H1 (cell line): ENCODE measurements at regions of chr1 and their contacts with region 1.

Region 1: GRCh38 chr1:111769517-111770146 is 13.9 kb downstream of the DDX20 start:
- DNase-seq: no peak
- H3K4me3 ChIP-seq: no peak overlapping the region
- H3K27ac ChIP-seq: no peak overlapping the region
- H3K4me1 ChIP-seq: no peaks in the 10 kb centered on the region
- H3K27me3 ChIP-seq: no peaks in the 10 kb centered on the region
- CTCF ChIP-seq: peak in 2 of 3 experiments; percentile 60 to 73; a peak in 2 of 4 replicates
- EP300 ChIP-seq: no peak
- POLR2A ChIP-seq: no peak
- RAD21 ChIP-seq: peak; percentile 81 to 83

Region 2: DNA sequence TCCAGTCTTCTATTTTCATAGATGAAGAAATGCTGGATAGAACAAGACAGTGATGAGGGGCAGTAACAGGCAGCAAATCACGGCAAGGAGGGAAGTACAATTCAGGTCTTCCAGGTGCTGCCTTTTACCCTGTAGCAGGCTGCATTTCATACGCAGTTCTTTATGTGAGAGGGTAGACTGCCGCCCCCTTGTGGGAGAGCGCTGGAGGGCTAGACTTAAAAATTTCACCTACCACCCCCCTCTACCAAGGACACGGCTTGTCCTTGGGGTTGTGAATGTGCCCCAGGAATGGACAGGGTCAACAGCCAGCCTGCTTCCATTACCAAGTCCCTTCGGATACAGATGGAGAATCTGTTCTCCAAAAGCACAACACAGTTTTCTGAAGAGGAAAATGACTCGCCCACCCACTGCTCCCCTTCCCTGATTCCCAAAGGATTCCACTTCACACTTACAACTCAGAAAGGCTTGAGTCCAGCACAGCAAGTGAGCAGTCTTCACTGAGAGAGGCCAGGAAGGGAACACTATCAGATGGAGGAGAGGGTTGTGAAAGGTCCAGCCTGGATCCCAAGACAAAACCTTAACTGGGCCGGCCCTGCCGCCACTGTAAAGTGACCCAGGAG is 327.9 kb before region 1 on chr1:
- CTCF ChIA-PET with region 1: no interaction called
- POLR2A ChIA-PET with region 1: no interaction called
- DNase-seq: peak; percentile 31 to 78
- H3K4me3 ChIP-seq: no peak overlapping the region
- H3K27ac ChIP-seq: no peak overlapping the region
- H3K4me1 ChIP-seq: no peaks in the 10 kb centered on the region
- H3K27me3 ChIP-seq: no peaks in the 10 kb centered on the region
- CTCF ChIP-seq: peak; percentile 67 to 81 (median 68)
- EP300 ChIP-seq: no peak
- POLR2A ChIP-seq: no peak
- RAD21 ChIP-seq: peak; percentile 56 to 66

Region 3: DNA sequence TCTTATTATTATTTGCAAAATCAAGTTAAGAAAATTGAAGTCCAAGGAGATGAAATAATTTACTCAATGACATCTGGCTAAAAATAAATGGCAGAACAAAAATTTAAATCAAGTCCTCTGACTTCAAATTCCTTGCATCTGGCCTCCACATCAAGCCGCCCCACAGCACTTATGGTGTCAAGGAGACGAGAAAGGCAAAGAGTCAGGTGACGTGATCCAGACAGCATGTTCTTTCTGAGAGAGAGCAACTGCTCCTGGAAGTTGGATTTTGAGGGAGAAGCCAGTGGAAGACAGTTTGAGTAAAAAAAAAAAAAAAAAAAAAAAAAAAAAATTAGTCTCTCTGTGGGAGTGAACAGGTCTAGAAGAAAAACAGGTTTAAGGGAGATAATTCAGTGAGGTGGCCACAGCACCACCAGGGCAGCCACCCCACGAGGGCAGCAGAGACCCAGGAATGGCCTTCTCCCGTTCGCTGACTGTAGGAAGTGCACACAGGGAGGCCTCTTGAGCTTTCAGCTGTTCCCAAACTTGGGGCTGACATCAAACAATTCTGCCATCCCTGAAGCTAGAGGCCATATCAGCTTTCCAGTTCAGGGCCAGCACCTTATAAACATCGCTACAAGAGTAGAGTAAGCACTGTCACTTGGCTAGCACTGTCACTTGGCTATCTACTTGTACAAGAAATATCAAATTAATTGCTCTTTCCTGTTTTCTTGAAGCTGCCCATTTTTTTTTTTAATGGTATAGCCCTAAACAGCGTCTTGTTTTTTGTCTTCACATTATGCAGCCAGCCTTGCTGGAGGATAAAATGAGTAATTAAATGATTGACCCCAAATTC is 288.0 kb before region 1 on chr1:
- CTCF ChIA-PET with region 1: interaction called, 17 read pairs
- POLR2A ChIA-PET with region 1: no interaction called
- DNase-seq: peak; percentile 43 to 75
- H3K4me3 ChIP-seq: no peak overlapping the region
- H3K27ac ChIP-seq: no peak overlapping the region
- H3K4me1 ChIP-seq: no peaks in the 10 kb centered on the region
- H3K27me3 ChIP-seq: no peaks in the 10 kb centered on the region
- CTCF ChIP-seq: peak; percentile 84 to 92 (median 84)
- EP300 ChIP-seq: no peak
- POLR2A ChIP-seq: no peak
- RAD21 ChIP-seq: peak; percentile 97

Region 4: GRCh38 chr1:111624382-111624781 is 145.2 kb before region 1 on chr1:
- CTCF ChIA-PET with region 1: no interaction called
- POLR2A ChIA-PET with region 1: no interaction called
- DNase-seq: no peak
- H3K4me3 ChIP-seq: no peak overlapping the region
- H3K27ac ChIP-seq: no peak overlapping the region
- H3K4me1 ChIP-seq: peaks cover 0 to 2% (median under 1%) of the 10 kb centered on the region in 4 experiments; a peak in 4 of 7 replicates
- H3K27me3 ChIP-seq: no peaks in the 10 kb centered on the region
- CTCF ChIP-seq: no peak
- EP300 ChIP-seq: no peak
- POLR2A ChIP-seq: no peak
- RAD21 ChIP-seq: no peak

Region 5: GRCh38 chr1:111719674-111720132 is 49.9 kb before region 1 on chr1:
- CTCF ChIA-PET with region 1: interaction called, 1,070 read pairs
- POLR2A ChIA-PET with region 1: interaction called, 6 read pairs
- DNase-seq: no peak
- H3K4me3 ChIP-seq: no peak overlapping the region
- H3K27ac ChIP-seq: no peak overlapping the region
- H3K4me1 ChIP-seq: peaks cover 2 to 14% (median 10%) of the 10 kb centered on the region in 4 experiments; a peak in 5 of 7 replicates
- H3K27me3 ChIP-seq: no peaks in the 10 kb centered on the region; a peak in 1 of 7 replicates
- CTCF ChIP-seq: no peak
- EP300 ChIP-seq: no peak
- POLR2A ChIP-seq: no peak
- RAD21 ChIP-seq: no peak

Region 6: GRCh38 chr1:111739194-111739924 is 30.3 kb before region 1 on chr1 and contains the start of gene INKA2:
- CTCF ChIA-PET with region 1: interaction called, 1,070 read pairs
- POLR2A ChIA-PET with region 1: interaction called, 3 read pairs
- DNase-seq: peak in 1 of 2 experiments; percentile 91
- H3K4me3 ChIP-seq: peak within 1 kb of the TSS; percentile 62 to 74 (median 71)
- H3K27ac ChIP-seq: peak within 1 kb of the TSS; percentile 38; the same call in 1 of the 2 replicates
- H3K4me1 ChIP-seq: peaks cover 19 to 27% (median 23%) of the 10 kb centered on the region in 4 experiments
- H3K27me3 ChIP-seq: peaks cover 0 to 6% (median 4%) of the 10 kb centered on the region in 4 experiments; a peak in 3 of 7 replicates
- CTCF ChIP-seq: no peak
- EP300 ChIP-seq: no peak
- POLR2A ChIP-seq: peak; percentile 37 to 64
- RAD21 ChIP-seq: no peak
- total RNA-seq, gene INKA2: 10.9 and 11.5 TPM in 2 replicates

Region 7: GRCh38 chr1:111747282-111747734 is 22.3 kb before region 1 on chr1:
- CTCF ChIA-PET with region 1: interaction called, 1,070 read pairs
- POLR2A ChIA-PET with region 1: interaction called, 3 read pairs
- DNase-seq: peak in 1 of 2 experiments; percentile 70
- H3K4me3 ChIP-seq: no peak overlapping the region
- H3K27ac ChIP-seq: no peak overlapping the region
- H3K4me1 ChIP-seq: peaks cover 0 to 3% (median 0%) of the 10 kb centered on the region in 4 experiments; a peak in 4 of 7 replicates
- H3K27me3 ChIP-seq: no peaks in the 10 kb centered on the region; a peak in 1 of 7 replicates
- CTCF ChIP-seq: peak; percentile 71 to 98 (median 98)
- EP300 ChIP-seq: peak in 1 of 2 experiments; percentile 45; a peak in 1 of 3 replicates
- POLR2A ChIP-seq: no peak
- RAD21 ChIP-seq: peak; percentile 73 to 84

Region 8: GRCh38 chr1:111755331-111756123 is 14.1 kb before region 1 on chr1 and contains the start of gene DDX20:
- CTCF ChIA-PET with region 1: interaction called, 1,070 read pairs
- POLR2A ChIA-PET with region 1: interaction called, 26 read pairs
- DNase-seq: peak in 1 of 2 experiments; percentile 92
- H3K4me3 ChIP-seq: peak within 1 kb of the TSS; percentile 89 to 93 (median 91)
- H3K27ac ChIP-seq: peak within 1 kb of the TSS; percentile 86
- H3K4me1 ChIP-seq: peaks cover 0 to 3% (median 0%) of the 10 kb centered on the region in 4 experiments; a peak in 1 of 7 replicates
- H3K27me3 ChIP-seq: no peaks in the 10 kb centered on the region
- CTCF ChIP-seq: peak; percentile 67 to 84 (median 83)
- EP300 ChIP-seq: no peak
- POLR2A ChIP-seq: peak; percentile 78 to 91
- RAD21 ChIP-seq: peak; percentile 65 to 66
- total RNA-seq, gene DDX20: 24.7 and 25.4 TPM in 2 replicates

Region 9: GRCh38 chr1:111789666-111790316 is 20.2 kb after region 1 on chr1:
- CTCF ChIA-PET with region 1: interaction called, 12 read pairs
- POLR2A ChIA-PET with region 1: no interaction called
- DNase-seq: no peak
- H3K4me3 ChIP-seq: no peak overlapping the region
- H3K27ac ChIP-seq: no peak overlapping the region
- H3K4me1 ChIP-seq: peaks cover 0 to 4% (median 0%) of the 10 kb centered on the region in 4 experiments; a peak in 1 of 7 replicates
- H3K27me3 ChIP-seq: no peaks in the 10 kb centered on the region
- CTCF ChIP-seq: no peak; a peak in 1 of 4 replicates
- EP300 ChIP-seq: no peak
- POLR2A ChIP-seq: no peak
- RAD21 ChIP-seq: peak; percentile 25 to 41; a peak in 2 of 4 replicates